ENCODE measurements at regions of chr12 and their contacts with region 1.

Region 1: DNA sequence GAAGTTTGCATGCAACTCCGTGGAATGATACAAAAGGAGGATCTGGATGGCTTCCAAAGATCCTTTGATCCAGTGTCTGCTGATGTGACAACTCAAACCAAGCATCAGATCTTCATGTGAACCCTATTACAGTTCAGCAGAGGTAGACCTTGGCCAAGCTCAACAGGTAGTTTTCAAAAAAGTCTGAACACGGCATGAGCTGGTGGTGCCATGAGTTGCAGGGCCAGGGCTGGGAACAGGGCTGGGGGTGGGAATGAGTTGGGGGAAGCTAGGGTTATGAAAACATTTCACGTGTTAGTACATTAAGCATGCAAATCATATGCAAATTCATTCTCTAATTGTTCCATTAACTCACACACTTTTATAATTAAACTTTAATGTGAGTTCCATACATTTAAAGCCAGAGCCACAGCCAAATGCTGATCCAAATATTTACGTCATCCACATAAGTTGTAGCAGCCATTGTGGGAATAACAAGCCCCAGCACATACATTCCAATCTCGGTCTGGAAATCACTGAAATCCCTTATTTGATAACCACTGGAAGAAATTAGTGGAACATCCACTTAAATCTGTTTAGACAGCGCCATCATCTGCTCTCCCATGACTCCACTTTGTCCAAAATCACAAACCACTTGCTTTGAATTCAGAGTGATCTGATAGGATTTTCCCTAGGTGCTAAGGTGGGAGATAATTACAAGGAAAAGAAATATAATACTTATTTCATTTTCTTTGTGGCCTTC is 158.5 kb downstream of the APAF1 start:
- DNase-seq: no peak
- ATAC-seq: no peak
- H3K4me3 ChIP-seq: no peak overlapping the region
- H3K27ac ChIP-seq: no peak overlapping the region
- H3K4me1 ChIP-seq: no peaks in the 10 kb centered on the region
- H3K27me3 ChIP-seq: peaks cover 6% of the 10 kb centered on the region
- CTCF ChIP-seq: no peak

Region 2: DNA sequence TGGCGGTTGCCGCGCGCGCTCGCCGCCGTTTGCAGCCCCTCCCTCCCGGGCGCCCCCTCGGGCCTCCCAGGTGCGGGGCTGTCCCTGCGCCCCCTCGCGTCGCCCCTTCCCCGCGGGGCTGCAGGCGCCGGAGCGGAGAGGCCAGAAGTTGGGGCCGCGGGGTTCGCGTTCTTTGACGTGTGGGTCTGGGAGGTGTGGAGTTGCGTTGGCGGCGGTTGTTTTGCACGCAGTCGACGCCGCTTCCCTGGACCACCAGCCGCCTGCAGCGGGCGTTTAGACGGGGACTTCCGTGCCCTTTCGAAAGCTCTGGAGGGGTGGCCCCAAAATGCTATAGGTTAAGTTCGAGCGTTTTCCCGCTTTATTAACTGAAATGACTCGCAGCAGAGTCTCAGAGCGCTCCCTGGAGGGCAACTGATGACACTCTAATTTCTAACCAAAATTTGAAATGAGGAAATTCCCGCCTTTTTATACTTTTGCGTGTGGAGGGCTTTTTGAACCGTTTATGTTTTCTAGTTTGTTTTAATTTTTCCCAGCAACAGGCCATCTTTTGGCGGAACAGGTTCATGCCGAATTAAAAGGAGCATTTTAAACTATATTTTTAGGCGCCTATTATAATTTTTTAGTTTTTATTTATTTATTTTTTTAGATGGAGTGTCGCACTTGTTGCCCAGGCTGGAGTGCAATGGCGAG is 287.3 kb before region 1 on chr12:
- CTCF ChIA-PET with region 1: no interaction called
- POLR2A ChIA-PET with region 1: no interaction called
- in situ Hi-C with region 1: no loop called
- intact Hi-C with region 1: no loop called
- DNase-seq: peak; percentile 55
- ATAC-seq: peak; percentile 72
- H3K4me3 ChIP-seq: peak overlapping the region; percentile 81 to 99
- H3K27ac ChIP-seq: peak overlapping the region; percentile 98
- H3K4me1 ChIP-seq: peaks cover 27% of the 10 kb centered on the region
- H3K27me3 ChIP-seq: no peaks in the 10 kb centered on the region
- CTCF ChIP-seq: peak; percentile 89

Region 3: GRCh38 chr12:98618952-98619351 is 184.7 kb before region 1 on chr12:
- CTCF ChIA-PET with region 1: interaction called, 13 read pairs
- POLR2A ChIA-PET with region 1: no interaction called
- in situ Hi-C with region 1: no loop called
- intact Hi-C with region 1: no loop called
- DNase-seq: no peak
- ATAC-seq: no peak
- H3K4me3 ChIP-seq: no peak overlapping the region
- H3K27ac ChIP-seq: no peak overlapping the region
- H3K4me1 ChIP-seq: no peaks in the 10 kb centered on the region
- H3K27me3 ChIP-seq: no peaks in the 10 kb centered on the region
- CTCF ChIP-seq: no peak

Region 4: GRCh38 chr12:98741556-98742265 is 61.9 kb before region 1 on chr12:
- CTCF ChIA-PET with region 1: no interaction called
- POLR2A ChIA-PET with region 1: interaction called, 10 read pairs
- in situ Hi-C with region 1: no loop called
- intact Hi-C with region 1: no loop called
- DNase-seq: no peak
- ATAC-seq: no peak
- H3K4me3 ChIP-seq: no peak overlapping the region
- H3K27ac ChIP-seq: no peak overlapping the region
- H3K4me1 ChIP-seq: no peaks in the 10 kb centered on the region
- H3K27me3 ChIP-seq: no peaks in the 10 kb centered on the region
- CTCF ChIP-seq: no peak